Activated T-helper 1 cell treated with anti-CD3 and anti-CD28 coated beads, Interleukin-12 subunit alpha, Interleukin-12 subunit beta, Interleukin-2, Interleukin-4 antibody, amounts not matched to agents 30 ng/mL and 10 ng/mL and 1 ng/mL, durations not matched to agents 14 hours and 24 hours and 36 hours (primary cell): ENCODE measurements at regions of chr15 and their contacts with region 1.

Region 1: DNA sequence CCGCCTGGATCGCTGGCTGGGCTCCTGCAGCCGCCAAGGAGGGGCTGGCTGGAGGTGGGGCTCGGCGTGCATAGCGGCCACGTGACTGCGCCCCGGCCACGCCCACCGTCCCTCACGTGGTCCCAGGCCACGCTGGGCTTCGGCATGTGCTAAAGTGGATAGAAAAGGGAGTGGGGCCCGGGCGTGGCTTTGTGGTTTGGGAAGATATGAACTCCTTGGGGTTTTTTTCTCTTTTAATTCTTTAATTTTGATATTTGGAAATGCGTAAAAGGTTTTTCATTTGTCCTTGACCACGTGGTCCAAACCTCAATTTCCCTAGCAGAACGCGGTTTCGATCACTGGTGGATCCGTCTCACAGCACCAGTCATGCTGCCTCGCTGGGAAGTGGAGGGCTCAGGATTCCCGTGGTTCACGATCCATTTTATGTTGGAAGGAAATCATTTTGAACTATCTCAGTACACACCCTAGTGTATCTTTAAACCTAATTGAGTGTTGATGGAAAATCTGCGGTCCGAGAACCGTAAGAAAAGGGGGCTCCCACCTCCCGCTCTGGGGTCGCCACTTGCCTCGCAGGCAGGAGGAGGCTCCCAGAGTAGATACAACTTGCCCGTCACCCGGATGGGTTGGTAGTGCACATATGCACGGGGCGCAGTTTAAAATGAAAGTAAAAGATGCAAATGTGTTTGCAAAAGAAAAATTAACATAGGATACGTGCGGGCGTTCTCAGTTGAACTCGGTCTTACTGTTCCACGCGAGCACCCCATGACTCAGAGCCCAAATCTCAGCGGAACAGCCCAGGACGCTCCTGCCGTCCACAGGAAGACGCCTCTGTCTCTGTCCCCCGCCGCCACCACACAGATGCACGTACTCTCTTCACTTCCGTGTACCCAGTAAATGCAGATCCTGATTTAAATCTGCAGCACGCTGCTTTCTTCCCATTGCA is 141.9 kb downstream of the PGPEP1L start:
- DNase-seq: peak; percentile 63
- H3K4me3 Mint-ChIP-seq: peak overlapping the region; percentile 82
- H3K27ac Mint-ChIP-seq: peak overlapping the region; percentile 89
- H3K4me1 Mint-ChIP-seq: peaks cover 30% of the 10 kb centered on the region
- H3K27me3 Mint-ChIP-seq: peaks cover 2% of the 10 kb centered on the region

Region 2: DNA sequence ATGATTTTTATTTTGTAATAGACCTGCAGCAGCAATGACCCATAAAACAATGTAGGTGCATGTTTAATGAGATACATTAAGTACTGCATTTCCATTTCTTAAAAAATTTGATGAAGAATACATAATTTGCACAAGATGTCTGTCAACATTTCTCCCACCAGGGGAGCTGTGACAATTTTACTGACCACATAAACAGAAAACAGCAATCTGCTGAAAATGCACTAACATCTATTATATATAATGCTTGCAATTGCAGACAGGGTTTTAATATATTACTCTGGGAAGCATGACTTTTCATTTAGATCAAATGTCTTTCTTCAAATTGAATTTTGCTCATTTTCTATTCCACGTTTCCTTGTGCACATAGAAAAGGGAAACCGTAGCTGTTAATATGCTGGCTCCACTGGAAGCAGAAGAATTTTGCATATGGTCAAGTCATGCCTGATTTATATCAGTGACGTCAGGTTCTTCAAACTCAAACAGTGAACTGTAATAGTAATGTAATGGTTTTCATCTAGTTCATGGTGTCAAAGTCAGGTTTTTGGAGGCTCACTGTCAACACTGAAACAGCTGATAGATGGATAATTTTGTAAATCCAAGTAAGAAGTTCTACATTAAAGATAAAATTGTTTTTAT is 297.2 kb before region 1 on chr15:
- intact Hi-C with region 1: no loop called
- DNase-seq: no peak
- H3K4me3 Mint-ChIP-seq: no peak overlapping the region
- H3K27ac Mint-ChIP-seq: no peak overlapping the region
- H3K4me1 Mint-ChIP-seq: no peaks in the 10 kb centered on the region
- H3K27me3 Mint-ChIP-seq: peaks cover 9% of the 10 kb centered on the region

Region 3: DNA sequence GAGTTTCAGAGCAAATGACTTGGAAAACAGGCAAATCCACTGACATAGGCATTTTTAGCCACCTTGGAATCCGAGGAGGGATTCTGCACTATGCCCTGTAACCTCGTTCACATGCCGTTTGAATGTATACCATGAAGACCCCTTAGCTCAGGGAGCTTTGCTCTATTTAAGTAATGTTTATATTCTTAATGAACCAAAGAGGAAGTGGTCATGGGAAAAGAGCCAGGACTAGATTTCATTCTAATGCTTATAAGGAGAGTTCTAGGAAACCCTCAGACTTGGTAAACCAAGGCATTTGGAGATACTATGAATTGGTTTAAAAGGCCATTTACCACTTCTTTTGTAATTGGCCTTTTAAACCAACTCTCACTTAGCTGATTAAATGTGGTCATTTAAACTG is 38.5 kb before region 1 on chr15:
- intact Hi-C with region 1: no loop called
- DNase-seq: no peak
- H3K4me3 Mint-ChIP-seq: no peak overlapping the region
- H3K27ac Mint-ChIP-seq: no peak overlapping the region
- H3K4me1 Mint-ChIP-seq: no peaks in the 10 kb centered on the region
- H3K27me3 Mint-ChIP-seq: no peaks in the 10 kb centered on the region

Region 4: GRCh38 chr15:98853161-98853560 is 12.5 kb before region 1 on chr15:
- intact Hi-C with region 1: loop called (anchors 1 kb)
- DNase-seq: peak; percentile 72
- H3K4me3 Mint-ChIP-seq: peak overlapping the region; percentile 94
- H3K27ac Mint-ChIP-seq: peak overlapping the region; percentile 99
- H3K4me1 Mint-ChIP-seq: peaks cover 45% of the 10 kb centered on the region
- H3K27me3 Mint-ChIP-seq: no peaks in the 10 kb centered on the region

Region 5: GRCh38 chr15:98896802-98897732 is 31.4 kb after region 1 on chr15:
- intact Hi-C with region 1: no loop called
- DNase-seq: no peak
- H3K4me3 Mint-ChIP-seq: no peak overlapping the region
- H3K27ac Mint-ChIP-seq: no peak overlapping the region
- H3K4me1 Mint-ChIP-seq: peaks cover 9% of the 10 kb centered on the region
- H3K27me3 Mint-ChIP-seq: no peaks in the 10 kb centered on the region